ENCODE measurements at regions of chr19 and their contacts with region 1.

Region 1: DNA sequence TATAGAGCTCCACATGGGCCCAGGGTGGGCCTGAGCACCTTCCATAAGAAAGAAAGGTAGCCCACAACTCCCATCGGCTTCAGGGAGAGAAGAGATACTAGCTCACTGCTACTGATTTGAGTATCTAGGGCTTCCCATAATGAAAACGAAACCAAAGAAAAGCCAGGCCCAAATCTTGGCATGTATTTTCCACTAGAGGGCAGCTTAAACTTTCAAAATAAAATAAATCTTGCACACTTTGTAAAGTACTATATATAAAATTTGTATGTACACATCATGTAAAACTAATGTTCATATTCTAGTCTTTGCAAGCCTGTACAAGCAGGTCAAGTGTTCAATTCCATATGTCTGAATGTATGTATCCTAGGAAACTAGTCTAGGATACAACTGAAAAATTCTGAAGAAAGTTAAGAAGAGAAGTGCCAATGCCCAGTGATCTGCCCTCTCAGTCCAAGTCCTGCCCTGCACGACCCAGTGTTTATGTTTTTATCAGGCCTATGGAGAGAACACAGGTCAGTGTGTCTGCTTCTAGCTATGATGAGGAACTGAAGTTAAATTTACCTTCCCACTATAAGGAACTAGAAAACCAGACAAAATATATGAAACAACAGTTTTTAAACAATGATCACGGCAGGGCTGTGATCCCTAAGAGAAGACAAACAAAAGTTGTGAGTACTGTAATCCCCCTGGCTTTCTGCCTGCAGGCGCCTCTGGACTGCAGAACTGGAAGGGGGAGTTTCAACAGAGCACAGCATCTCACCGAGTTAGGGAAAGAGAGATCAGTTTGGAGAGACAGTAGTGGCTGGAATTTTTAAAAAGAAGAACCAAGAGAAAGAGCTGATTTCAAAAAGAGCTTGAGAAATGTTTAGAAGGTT is 475.7 kb downstream of the UQCRFS1 start:
- DNase-seq: no peak
- H3K4me3 ChIP-seq: peak overlapping the region in 1 of 4 donors; percentile 10
- H3K27ac ChIP-seq: peak overlapping the region in 3 of 4 donors; percentile 34 to 52 (median 50)
- H3K4me1 ChIP-seq: peaks cover 0 to 22% (median 16%) of the 10 kb centered on the region in 4 donors
- H3K27me3 ChIP-seq: no peaks in the 10 kb centered on the region
- CTCF ChIP-seq: peak in 2 of 4 experiments; percentile 41 to 58
- EP300 ChIP-seq: no peak
- POLR2A ChIP-seq: no peak

Region 2: GRCh38 chr19:29121684-29122083 is 384.4 kb after region 1 on chr19:
- intact Hi-C with region 1: no loop called
- DNase-seq: no peak
- H3K4me3 ChIP-seq: no peak overlapping the region
- H3K27ac ChIP-seq: no peak overlapping the region
- H3K4me1 ChIP-seq: no peaks in the 10 kb centered on the region
- H3K27me3 ChIP-seq: no peaks in the 10 kb centered on the region
- CTCF ChIP-seq: no peak
- EP300 ChIP-seq: no peak
- POLR2A ChIP-seq: no peak

Region 3: GRCh38 chr19:29263305-29264135 is 526.3 kb after region 1 on chr19:
- intact Hi-C with region 1: loop called (anchors 2 kb)
- DNase-seq: no peak
- H3K4me3 ChIP-seq: no peak overlapping the region
- H3K27ac ChIP-seq: no peak overlapping the region
- H3K4me1 ChIP-seq: no peaks in the 10 kb centered on the region
- H3K27me3 ChIP-seq: peaks cover 0 to 26% (median 0%) of the 10 kb centered on the region in 3 donors
- CTCF ChIP-seq: peak in 3 of 4 experiments; percentile 26 to 72 (median 60)
- EP300 ChIP-seq: no peak
- POLR2A ChIP-seq: no peak

Measured in sigmoid colon (tissue), 7 donors.